ENCODE measurements at regions of chr12 and their contacts with region 1.

Region 1: DNA sequence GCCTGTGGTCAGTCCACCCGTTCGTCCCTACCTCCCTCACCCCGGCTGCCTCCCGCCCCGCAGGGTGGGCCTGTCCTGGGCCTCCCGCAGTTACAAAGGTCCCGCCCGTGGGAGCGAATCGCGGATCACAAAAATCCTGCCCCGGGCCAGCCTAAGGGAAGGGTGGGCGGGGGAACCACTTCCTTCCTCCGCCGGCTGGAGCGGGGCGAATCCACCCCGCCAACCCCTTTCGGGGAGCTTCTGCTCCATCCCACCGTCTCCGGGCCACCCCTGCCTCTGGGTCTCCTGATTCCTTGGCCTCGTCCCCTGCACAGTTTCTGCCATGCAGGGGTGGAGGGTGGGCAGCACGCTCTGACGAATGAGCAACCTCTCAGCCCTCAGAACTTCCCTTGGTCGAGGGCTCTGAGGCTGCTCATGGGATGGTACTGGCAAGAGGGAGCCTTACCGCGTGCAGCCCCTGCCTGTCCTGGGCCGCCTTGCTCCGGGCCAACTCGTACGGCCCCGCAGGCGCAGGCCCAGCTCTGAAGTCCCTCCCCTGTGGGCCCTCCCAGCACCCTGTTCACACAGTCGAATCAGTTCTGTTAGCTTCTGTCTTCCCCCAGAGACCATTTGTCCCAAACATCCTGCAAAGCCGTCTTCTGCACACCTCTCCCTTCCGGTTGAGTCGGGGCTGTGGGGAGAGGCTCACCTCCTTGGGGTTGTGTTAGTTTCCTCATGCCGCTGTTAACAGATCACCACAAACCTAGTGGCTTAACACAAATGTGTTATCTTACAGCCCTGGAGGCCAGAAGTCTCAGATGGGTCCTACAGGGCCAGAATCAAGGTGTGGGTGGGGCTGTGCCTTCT is 589 bp upstream of the HVCN1 start:
- DNase-seq: peak; percentile 89
- H3K4me3 Mint-ChIP-seq: peak overlapping the region; percentile 86
- H3K27ac Mint-ChIP-seq: peak overlapping the region; percentile 96
- H3K4me1 Mint-ChIP-seq: peaks cover 44% of the 10 kb centered on the region
- H3K27me3 Mint-ChIP-seq: peaks cover 5% of the 10 kb centered on the region

Region 2: GRCh38 chr12:110670161-110670701 is 19.3 kb before region 1 on chr12:
- intact Hi-C with region 1: loop called (anchors 2 kb)
- DNase-seq: peak; percentile 84
- H3K4me3 Mint-ChIP-seq: peak overlapping the region; percentile 65
- H3K27ac Mint-ChIP-seq: peak overlapping the region; percentile 90
- H3K4me1 Mint-ChIP-seq: peaks cover 39% of the 10 kb centered on the region
- H3K27me3 Mint-ChIP-seq: no peaks in the 10 kb centered on the region

Measured in activated CD4-positive, alpha-beta T cell treated with anti-CD3 and anti-CD28 coated beads, Interleukin-2, amount 10 ng/mL, durations not matched to agents 24 days and 14 days (primary cell).